PC-3 (cell line): ENCODE measurements at regions of chr7 and their contacts with region 1.

Region 1: GRCh38 chr7:51224811-51225612 is 91.6 kb downstream of the COBL start:
- DNase-seq: peak; percentile 86
- ATAC-seq: peak; percentile 78
- H3K4me3 ChIP-seq: no peak overlapping the region
- H3K27ac ChIP-seq: peak overlapping the region; percentile 79
- H3K4me1 ChIP-seq: peaks cover 25% of the 10 kb centered on the region
- H3K27me3 ChIP-seq: no peaks in the 10 kb centered on the region
- CTCF ChIP-seq: peak; percentile 80

Region 2: GRCh38 chr7:51198654-51199053 is 26.4 kb before region 1 on chr7:
- CTCF ChIA-PET with region 1: no interaction called
- POLR2A ChIA-PET with region 1: no interaction called
- intact Hi-C with region 1: no loop called
- DNase-seq: no peak
- ATAC-seq: no peak
- H3K4me3 ChIP-seq: no peak overlapping the region
- H3K27ac ChIP-seq: no peak overlapping the region
- H3K4me1 ChIP-seq: no peaks in the 10 kb centered on the region
- H3K27me3 ChIP-seq: no peaks in the 10 kb centered on the region
- CTCF ChIP-seq: no peak

Region 3: GRCh38 chr7:51357821-51358220 is 132.8 kb after region 1 on chr7:
- CTCF ChIA-PET with region 1: interaction called, 6 read pairs
- POLR2A ChIA-PET with region 1: no interaction called
- intact Hi-C with region 1: loop called (anchors 1 kb)
- DNase-seq: no peak
- ATAC-seq: peak; percentile 64
- H3K4me3 ChIP-seq: no peak overlapping the region
- H3K27ac ChIP-seq: no peak overlapping the region
- H3K4me1 ChIP-seq: no peaks in the 10 kb centered on the region
- H3K27me3 ChIP-seq: no peaks in the 10 kb centered on the region
- CTCF ChIP-seq: peak; percentile 53; the same call in 1 of the 2 replicates